Left ventricle myocardium inferior (tissue), 1 donor: ENCODE measurements at regions of chr12 and their contacts with region 1.

Region 1: GRCh38 chr12:110100315-110100970 is 23.7 kb upstream of the IFT81 start:
- DNase-seq: peak; percentile 45
- H3K4me3 ChIP-seq: no peak overlapping the region
- H3K27ac ChIP-seq: peak overlapping the region; percentile 51
- H3K4me1 ChIP-seq: peaks cover 15% of the 10 kb centered on the region
- H3K27me3 ChIP-seq: no peaks in the 10 kb centered on the region
- CTCF ChIP-seq: peak; percentile 92

Region 2: DNA sequence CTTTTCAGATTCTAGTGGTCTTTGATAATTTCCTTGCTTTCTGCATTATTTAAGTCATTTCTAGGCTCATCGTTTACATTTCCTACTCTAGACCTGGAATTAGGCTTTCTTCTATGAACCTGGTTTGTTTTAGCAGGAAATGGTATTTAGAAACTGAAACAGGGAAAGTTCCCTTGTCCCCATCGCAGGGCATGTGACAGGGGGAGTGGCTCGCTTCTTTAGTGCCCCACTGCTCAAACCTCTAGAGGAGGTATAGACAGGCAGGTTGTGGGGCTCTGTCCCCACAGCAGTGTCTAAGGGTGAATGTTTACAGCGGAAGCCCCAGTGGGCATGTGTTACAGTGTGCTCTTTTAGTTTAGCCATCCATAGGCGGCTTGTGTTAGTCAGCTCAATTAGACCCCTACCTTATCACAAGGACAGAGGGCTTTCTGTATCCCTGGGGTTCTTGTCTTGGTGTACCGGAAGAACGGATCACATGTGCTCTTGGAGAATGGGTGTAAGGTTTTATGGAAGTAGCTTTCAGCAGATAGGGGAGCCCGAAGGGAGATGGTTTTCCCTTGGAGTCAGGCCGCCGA is 48.7 kb after region 1 on chr12:
- intact Hi-C with region 1: no loop called
- DNase-seq: no peak
- H3K4me3 ChIP-seq: no peak overlapping the region
- H3K27ac ChIP-seq: no peak overlapping the region
- H3K4me1 ChIP-seq: no peaks in the 10 kb centered on the region
- H3K27me3 ChIP-seq: no peaks in the 10 kb centered on the region
- CTCF ChIP-seq: no peak

Region 3: GRCh38 chr12:110431957-110432587 is 331.6 kb after region 1 on chr12:
- intact Hi-C with region 1: loop called (anchors 5 kb)
- DNase-seq: no peak
- H3K4me3 ChIP-seq: peak overlapping the region; percentile 71
- H3K27ac ChIP-seq: peak overlapping the region; percentile 44
- H3K4me1 ChIP-seq: peaks cover 5% of the 10 kb centered on the region
- H3K27me3 ChIP-seq: no peaks in the 10 kb centered on the region
- CTCF ChIP-seq: no peak